ENCODE measurements at regions of chr9 and their contacts with region 1.

Region 1: DNA sequence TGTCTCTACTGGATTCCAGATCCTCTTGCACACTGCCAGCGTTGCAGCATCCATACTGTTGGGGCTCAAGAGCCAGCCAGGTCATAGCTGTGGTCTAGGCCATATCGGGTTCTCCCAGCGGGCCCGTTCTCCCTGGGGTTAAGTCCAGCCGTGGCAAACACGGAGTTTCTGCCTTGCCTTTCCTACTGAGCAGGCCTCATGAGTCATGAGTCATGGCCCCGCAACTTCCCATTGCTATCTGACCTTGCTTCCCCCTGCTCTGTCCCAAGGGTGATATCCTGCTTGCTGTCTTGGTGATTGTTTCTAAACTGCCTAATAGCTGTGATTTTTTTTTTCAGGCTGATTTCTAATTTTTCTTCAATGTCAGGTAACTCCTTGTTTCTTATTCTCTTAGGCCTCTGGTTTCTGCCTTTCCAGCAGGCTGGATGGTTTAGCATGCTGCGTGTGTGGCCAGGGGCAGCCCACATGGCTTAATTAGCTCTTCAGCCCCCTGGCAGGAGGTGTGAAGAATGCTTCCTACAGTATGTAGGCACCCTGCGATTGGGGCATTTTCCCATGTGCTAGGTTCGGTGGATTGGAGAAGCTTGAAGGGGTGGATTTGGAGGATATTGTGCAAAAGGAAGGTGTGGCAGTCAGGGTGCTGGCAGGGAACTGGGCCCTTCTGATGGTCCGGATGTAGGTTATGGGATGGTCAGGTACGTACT is 18.7 kb downstream of the DAPK1 start:
- DNase-seq: peak; percentile 90
- H3K4me3 ChIP-seq: no peak overlapping the region
- H3K27ac ChIP-seq: peak overlapping the region; percentile 64
- H3K4me1 ChIP-seq: peaks cover 52% of the 10 kb centered on the region
- H3K27me3 ChIP-seq: no peaks in the 10 kb centered on the region
- CTCF ChIP-seq: no peak
- POLR2A ChIP-seq: peak; percentile 34

Region 2: GRCh38 chr9:87529671-87530070 is 13.3 kb after region 1 on chr9:
- CTCF ChIA-PET with region 1: no interaction called
- POLR2A ChIA-PET with region 1: no interaction called
- dilution Hi-C with region 1: no loop called
- intact Hi-C with region 1: no loop called
- DNase-seq: no peak
- H3K4me3 ChIP-seq: no peak overlapping the region
- H3K27ac ChIP-seq: no peak overlapping the region
- H3K4me1 ChIP-seq: peaks cover 3% of the 10 kb centered on the region
- H3K27me3 ChIP-seq: no peaks in the 10 kb centered on the region
- CTCF ChIP-seq: no peak
- POLR2A ChIP-seq: no peak

Region 3: DNA sequence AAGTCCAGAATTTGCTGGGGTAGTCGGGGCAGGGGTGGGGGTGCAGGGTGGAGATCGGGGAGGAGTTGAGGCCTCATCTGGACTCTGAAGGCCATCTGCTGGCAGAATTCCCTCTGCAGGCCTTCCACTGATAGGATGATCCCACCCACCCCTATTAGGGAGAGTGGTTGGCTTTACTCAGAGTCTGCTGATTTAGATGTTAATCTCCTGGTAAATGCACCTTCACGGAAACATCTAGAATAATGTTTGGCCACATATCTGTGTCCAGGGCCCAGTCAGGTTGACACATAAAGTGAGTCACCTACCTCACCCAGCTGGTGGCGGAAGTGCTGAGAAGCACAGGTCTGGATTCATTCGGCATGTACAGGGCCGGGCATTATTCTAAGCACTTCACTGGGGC is 31.3 kb after region 1 on chr9:
- CTCF ChIA-PET with region 1: interaction called, 12 read pairs
- POLR2A ChIA-PET with region 1: no interaction called
- dilution Hi-C with region 1: no loop called
- intact Hi-C with region 1: no loop called
- DNase-seq: no peak
- H3K4me3 ChIP-seq: no peak overlapping the region
- H3K27ac ChIP-seq: no peak overlapping the region
- H3K4me1 ChIP-seq: peaks cover 24% of the 10 kb centered on the region
- H3K27me3 ChIP-seq: no peaks in the 10 kb centered on the region
- CTCF ChIP-seq: no peak
- POLR2A ChIP-seq: no peak

Region 4: DNA sequence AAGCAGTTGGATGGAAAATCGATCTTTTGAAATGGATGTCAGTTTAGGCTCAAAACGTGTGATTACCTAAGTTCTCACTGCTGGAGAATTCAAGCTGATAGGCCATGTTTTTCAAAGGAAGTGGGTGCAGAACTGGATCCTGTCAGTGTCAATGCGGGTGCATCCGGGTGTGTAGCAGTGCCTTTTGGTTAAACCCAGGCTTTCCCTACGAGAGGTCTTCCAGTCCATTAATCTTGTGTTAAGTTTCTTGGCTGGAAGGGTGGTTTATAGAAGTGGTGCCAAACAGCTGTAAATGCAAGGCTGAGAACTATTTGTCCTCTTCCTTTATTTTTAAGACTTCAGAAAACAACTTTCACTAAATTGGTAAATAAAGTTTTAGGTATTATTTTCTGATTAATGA is 53.1 kb after region 1 on chr9:
- CTCF ChIA-PET with region 1: interaction called, 3 read pairs
- POLR2A ChIA-PET with region 1: no interaction called
- dilution Hi-C with region 1: no loop called
- intact Hi-C with region 1: loop called (anchors 2 kb)
- DNase-seq: peak; percentile 95
- H3K4me3 ChIP-seq: peak overlapping the region in 1 of 3 experiments; percentile 21
- H3K27ac ChIP-seq: peak overlapping the region; percentile 19
- H3K4me1 ChIP-seq: peaks cover 30% of the 10 kb centered on the region
- H3K27me3 ChIP-seq: no peaks in the 10 kb centered on the region
- CTCF ChIP-seq: no peak
- POLR2A ChIP-seq: peak; percentile 68

Region 5: DNA sequence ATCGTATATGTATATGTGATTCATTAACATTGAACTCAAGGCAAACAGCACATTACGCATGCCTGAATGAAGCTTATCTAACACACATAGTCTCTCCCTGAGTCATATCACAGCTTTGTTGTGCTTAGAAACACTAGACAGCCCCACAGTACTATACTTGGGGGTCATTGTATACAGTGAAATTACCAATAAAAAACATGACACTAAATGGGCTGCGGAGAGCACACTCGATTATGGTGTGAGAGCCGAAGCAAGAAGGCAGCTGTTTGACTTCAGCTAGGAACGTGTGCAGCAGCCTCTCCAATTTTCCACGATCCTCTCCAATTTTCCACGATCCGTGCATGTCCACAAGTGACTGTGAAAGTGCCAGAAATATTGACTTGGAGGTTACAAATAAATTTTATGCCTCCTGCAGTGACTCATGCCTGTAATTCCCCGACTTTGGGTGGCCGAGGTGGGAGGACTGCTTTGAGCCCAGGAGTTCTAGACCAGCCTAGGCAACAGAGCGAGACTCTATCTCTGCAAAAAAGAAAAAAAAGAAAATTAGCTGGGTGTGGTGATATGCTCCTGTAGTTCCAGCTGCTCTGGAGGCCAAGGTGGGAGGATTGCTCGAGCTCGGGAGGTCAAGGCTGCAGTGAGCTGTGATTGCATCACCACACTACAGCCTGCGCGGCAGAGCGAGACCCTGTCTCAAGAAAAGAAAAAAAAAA is 83.7 kb after region 1 on chr9:
- CTCF ChIA-PET with region 1: no interaction called
- POLR2A ChIA-PET with region 1: no interaction called
- dilution Hi-C with region 1: no loop called
- intact Hi-C with region 1: loop called (anchors 2 kb)
- DNase-seq: peak; percentile 95
- H3K4me3 ChIP-seq: peak overlapping the region in 1 of 3 experiments; percentile 24
- H3K27ac ChIP-seq: peak overlapping the region; percentile 64
- H3K4me1 ChIP-seq: peaks cover 20% of the 10 kb centered on the region
- H3K27me3 ChIP-seq: no peaks in the 10 kb centered on the region
- CTCF ChIP-seq: no peak
- POLR2A ChIP-seq: no peak

Region 6: GRCh38 chr9:87640385-87640795 is 124.0 kb after region 1 on chr9:
- CTCF ChIA-PET with region 1: no interaction called
- POLR2A ChIA-PET with region 1: no interaction called
- dilution Hi-C with region 1: no loop called
- intact Hi-C with region 1: loop called (anchors 1 kb)
- DNase-seq: peak; percentile 97
- H3K4me3 ChIP-seq: no peak overlapping the region
- H3K27ac ChIP-seq: no peak overlapping the region
- H3K4me1 ChIP-seq: peaks cover 10% of the 10 kb centered on the region
- H3K27me3 ChIP-seq: no peaks in the 10 kb centered on the region
- CTCF ChIP-seq: no peak
- POLR2A ChIP-seq: no peak

Region 7: DNA sequence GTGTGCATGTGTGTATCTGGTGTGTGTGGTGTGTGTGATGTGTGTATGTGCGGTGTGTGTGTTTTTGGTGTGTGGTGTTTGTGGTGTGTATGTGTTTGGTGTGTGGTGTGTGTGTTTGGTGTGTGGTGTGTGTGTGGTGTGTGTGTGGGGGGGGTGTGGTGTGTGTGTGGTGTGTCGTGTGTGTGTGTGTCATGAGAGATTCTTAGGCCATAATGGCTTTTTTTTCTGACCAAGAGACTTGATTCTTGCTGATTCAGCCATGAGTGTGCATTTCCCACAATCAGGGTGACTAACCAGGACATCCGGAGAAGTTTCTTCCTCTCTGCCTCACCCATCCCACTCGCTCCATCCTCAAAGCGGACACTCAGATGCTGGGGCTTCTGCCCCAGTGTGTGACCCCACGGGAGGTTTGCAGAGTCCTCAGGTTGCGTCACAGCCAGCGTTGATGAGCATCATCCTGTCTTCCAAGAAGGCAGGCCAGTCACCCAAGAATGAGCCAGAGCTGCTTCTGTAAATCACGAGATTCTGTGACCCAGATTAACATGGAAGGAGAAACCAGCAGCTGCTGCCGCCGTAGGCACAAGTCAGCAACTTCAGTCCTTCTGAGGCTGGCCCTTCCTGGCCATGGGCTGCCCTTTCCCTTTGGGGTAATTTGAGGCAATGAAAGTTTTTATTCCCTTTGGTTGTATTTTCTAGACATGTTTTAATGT is 197.1 kb after region 1 on chr9:
- CTCF ChIA-PET with region 1: no interaction called
- POLR2A ChIA-PET with region 1: no interaction called
- dilution Hi-C with region 1: no loop called
- intact Hi-C with region 1: loop called (anchors 5 kb)
- DNase-seq: peak; percentile 88
- H3K4me3 ChIP-seq: peak overlapping the region in 1 of 3 experiments; percentile 20
- H3K27ac ChIP-seq: peak overlapping the region; percentile 93
- H3K4me1 ChIP-seq: peaks cover 29% of the 10 kb centered on the region
- H3K27me3 ChIP-seq: no peaks in the 10 kb centered on the region
- CTCF ChIP-seq: no peak
- POLR2A ChIP-seq: peak; percentile 46